ENCODE measurements at regions of chr22 and their contacts with region 1.

Region 1: DNA sequence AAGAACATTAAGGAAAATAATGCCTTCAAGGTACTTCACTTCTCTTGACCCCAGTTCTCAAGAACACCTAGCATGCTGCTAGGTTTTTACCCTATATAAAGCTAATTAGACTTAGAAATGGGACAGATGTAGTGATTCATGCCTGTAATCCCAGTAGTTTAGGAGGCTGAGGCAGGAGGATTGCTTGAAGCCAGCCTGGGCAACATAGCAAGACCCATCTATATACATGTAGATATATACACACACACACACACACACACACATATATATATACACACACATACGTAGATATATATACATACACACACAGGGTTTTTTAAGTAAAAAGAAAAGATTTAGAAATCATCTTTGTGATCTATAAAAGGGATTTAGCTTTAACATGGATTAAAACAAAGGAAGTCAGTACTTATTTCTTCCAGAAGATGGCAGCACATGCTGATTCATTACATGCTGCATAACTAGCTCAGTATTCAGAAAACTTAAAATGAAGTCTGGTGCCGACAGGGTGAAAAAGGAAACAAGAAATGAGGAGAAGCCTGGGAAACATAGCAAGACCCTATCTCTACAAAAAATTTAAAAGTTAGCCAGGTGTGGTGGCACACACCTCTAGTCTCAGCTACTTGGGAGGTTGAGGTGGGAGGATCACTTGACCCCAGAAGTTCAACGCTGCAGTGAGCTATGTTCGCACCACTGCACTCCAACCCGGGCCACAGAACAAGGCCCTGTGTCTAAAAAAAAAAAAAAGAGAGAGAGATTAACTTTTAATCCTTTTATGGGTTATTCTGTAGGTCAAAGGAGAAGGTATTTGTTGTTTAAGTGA is 28.5 kb upstream of the RBX1 start:
- DNase-seq: no peak
- H3K4me3 ChIP-seq: peak overlapping the region in 1 of 59 donors; percentile 3
- H3K27ac ChIP-seq: peak overlapping the region in 5 of 59 donors; percentile 6 to 34 (median 16)
- H3K27me3 ChIP-seq: no peaks in the 10 kb centered on the region
- CTCF ChIP-seq: peak; percentile 64 to 90 (median 82)

Region 2: GRCh38 chr22:40826984-40827741 is 95.5 kb before region 1 on chr22:
- intact Hi-C with region 1: no loop called
- DNase-seq: no peak
- H3K4me3 ChIP-seq: no peak overlapping the region
- H3K27ac ChIP-seq: no peak overlapping the region
- H3K27me3 ChIP-seq: no peaks in the 10 kb centered on the region
- CTCF ChIP-seq: no peak

Region 3: DNA sequence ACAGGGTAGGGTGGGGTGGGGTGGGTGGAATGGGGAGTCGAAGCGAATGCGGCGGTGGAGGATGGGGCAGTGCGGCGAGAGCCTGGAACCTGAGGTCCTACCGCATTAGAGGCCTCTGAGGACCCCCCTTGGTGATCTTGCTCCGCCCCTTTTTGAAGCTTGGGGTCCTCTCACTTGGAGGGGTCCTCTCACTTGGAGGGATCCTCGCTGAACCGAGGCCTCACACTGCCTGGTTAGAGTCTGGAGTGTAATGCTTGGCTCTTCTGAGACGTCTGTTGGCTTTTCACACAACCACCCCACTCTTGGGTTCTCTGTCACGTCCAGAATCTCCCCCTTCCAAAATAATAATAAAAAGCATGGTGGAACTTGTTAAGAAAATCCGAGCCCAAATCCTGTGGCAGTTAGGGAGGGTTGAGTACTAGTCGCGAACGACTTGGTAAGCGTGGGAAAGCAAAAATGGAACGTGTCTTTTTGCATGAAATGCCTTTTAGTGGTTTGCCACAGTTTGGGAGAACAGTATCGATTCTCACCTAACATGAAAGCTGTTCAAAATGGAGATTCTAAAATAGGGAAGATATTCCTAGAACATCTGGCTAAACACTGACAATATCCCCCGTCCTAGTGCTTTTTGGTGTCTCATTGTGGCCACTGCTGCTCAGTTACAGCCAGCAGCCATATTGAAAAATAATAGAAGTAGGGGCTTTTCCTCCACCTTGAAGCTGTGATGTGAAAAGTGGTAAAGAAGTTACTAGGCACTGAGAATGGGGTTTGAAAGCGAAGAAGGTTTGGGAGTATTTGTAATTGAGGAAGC is 29.3 kb after region 1 on chr22:
- intact Hi-C with region 1: no loop called
- DNase-seq: no peak
- H3K4me3 ChIP-seq: peak overlapping the region; percentile 66 to 97 (median 89)
- H3K27ac ChIP-seq: peak overlapping the region; percentile 86 to 100 (median 99)
- H3K27me3 ChIP-seq: no peaks in the 10 kb centered on the region
- CTCF ChIP-seq: peak in 1 of 56 donors; percentile 9

Region 4: GRCh38 chr22:41526837-41527799 is 604.4 kb after region 1 on chr22:
- intact Hi-C with region 1: loop called in 1 of 2 experiments (anchors 5 kb)
- DNase-seq: peak in 4 of 10 donors; percentile 51 to 72 (median 58)
- H3K4me3 ChIP-seq: peak overlapping the region in 1 of 59 donors; percentile 8
- H3K27ac ChIP-seq: peak overlapping the region; percentile 63 to 99 (median 90)
- H3K27me3 ChIP-seq: no peaks in the 10 kb centered on the region
- CTCF ChIP-seq: peak; percentile 44 to 93 (median 84)

Measured in dorsolateral prefrontal cortex (tissue), 120 donors.